ENCODE measurements at regions of chr17 and their contacts with region 1.

Region 1: DNA sequence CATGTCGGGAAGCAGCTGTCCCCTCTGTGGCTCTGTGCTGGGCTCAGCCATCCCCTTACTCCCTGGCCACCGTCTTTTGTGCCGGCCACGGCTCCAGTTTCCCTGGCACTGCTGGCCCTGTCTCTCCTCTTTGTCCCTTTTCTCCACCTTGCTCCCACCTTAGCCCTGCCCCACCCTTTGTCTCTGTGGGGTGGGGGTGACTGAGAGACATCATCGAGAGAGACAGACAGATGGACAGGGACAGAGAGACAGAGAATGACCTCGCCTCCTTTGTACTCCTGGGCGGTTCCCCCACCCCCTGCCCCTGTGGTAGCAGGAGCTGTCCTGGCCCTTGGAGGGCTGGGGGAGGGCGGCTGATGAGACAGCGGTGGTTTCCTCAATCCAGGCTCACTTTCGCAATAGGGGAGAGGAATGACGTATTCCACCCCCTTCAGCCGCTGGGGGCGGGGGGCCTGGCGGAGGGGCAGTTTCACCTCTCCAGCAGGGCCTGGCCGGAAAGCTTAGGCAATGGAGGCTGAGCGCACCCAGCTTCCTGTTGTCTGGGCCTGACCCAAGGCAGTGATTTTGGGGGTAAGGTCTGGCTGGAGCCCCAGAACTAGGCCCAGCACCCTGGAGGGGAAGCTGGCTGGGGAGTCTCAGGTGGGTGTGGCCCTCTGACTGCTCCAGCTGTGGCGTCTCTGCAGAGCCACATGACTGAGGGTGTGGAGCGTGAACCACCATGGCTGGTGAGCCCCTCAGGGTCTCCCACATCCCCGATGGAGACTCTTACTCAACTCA is 7.3 kb downstream of the FMNL1 start:
- DNase-seq: peak; percentile 56 to 93 (median 79)
- ATAC-seq: peak; percentile 57
- H3K4me3 ChIP-seq: peak overlapping the region; percentile 99
- H3K4me3 Mint-ChIP-seq: peak overlapping the region; percentile 87
- H3K27ac ChIP-seq: peak overlapping the region; percentile 98 to 99
- H3K27ac Mint-ChIP-seq: peak overlapping the region; percentile 100
- H3K4me1 ChIP-seq: peaks cover 98% of the 10 kb centered on the region
- H3K4me1 Mint-ChIP-seq: peaks cover 79% of the 10 kb centered on the region
- H3K27me3 ChIP-seq: no peaks in the 10 kb centered on the region
- H3K27me3 Mint-ChIP-seq: no peaks in the 10 kb centered on the region
- CTCF ChIP-seq: no peak

Region 2: GRCh38 chr17:45161019-45161825 is 67.7 kb before region 1 on chr17:
- CTCF ChIA-PET with region 1: no interaction called
- POLR2A ChIA-PET with region 1: interaction called, 57 read pairs
- intact Hi-C with region 1: no loop called
- DNase-seq: peak; percentile 94 to 100 (median 98)
- ATAC-seq: peak; percentile 93
- H3K4me3 ChIP-seq: peak overlapping the region; percentile 97
- H3K4me3 Mint-ChIP-seq: peak overlapping the region; percentile 93
- H3K27ac ChIP-seq: peak overlapping the region; percentile 98 to 99
- H3K27ac Mint-ChIP-seq: peak overlapping the region; percentile 94
- H3K4me1 ChIP-seq: peaks cover 26% of the 10 kb centered on the region
- H3K4me1 Mint-ChIP-seq: peaks cover 37% of the 10 kb centered on the region
- H3K27me3 ChIP-seq: no peaks in the 10 kb centered on the region
- H3K27me3 Mint-ChIP-seq: no peaks in the 10 kb centered on the region
- CTCF ChIP-seq: no peak

Region 3: DNA sequence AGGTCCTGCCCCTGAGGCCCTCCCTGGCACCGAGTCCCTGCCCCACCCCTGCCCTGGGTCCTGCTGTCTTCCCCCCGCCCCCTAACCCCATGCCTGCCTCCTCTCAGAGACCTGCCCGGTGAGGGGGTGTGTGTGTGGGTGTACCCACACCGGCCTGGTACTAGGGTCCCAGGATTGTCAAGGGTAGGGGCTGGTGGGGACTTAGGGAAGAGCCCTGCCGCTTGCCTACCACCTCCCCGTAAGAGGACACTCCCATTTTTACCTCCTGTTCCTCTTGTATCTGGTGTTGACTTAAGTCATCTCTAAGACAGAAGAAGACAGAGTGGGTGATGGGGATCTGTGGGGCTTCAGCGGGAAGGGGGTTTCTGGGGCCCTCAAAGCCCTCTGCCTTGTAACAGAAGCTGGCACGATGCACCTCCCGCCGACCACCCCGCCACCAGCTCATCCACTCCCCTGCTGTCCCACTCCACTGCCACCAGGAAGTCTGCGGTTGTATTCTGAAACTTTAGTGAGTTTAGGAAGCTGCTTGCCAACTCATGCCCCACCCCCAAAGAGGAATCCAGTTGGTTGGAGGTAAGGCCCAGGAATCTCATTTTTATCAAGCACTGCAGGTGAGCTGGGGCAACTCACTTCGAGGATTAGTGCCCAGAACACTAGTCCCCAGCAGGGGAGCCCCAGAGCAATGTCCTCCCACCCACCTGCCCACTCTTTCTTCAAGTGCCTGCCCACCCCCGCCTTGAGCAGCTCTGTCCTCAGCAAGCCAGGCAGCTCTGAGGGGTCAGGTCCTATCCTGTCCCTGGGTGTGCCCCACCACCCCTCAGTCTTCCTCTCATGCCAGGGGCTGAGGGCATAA is 27.4 kb after region 1 on chr17:
- CTCF ChIA-PET with region 1: interaction called, 6 read pairs
- POLR2A ChIA-PET with region 1: interaction called, 23 read pairs
- intact Hi-C with region 1: loop called in 1 of 2 experiments (anchors 5 kb)
- DNase-seq: peak in 1 of 14 experiments; percentile 36
- ATAC-seq: peak; percentile 69
- H3K4me3 ChIP-seq: no peak overlapping the region
- H3K4me3 Mint-ChIP-seq: peak overlapping the region; percentile 61
- H3K27ac ChIP-seq: peak overlapping the region in 1 of 2 donors; percentile 46
- H3K27ac Mint-ChIP-seq: peak overlapping the region; percentile 79
- H3K4me1 ChIP-seq: peaks cover 51% of the 10 kb centered on the region
- H3K4me1 Mint-ChIP-seq: peaks cover 72% of the 10 kb centered on the region
- H3K27me3 ChIP-seq: no peaks in the 10 kb centered on the region
- H3K27me3 Mint-ChIP-seq: no peaks in the 10 kb centered on the region
- CTCF ChIP-seq: peak; percentile 14

Region 4: DNA sequence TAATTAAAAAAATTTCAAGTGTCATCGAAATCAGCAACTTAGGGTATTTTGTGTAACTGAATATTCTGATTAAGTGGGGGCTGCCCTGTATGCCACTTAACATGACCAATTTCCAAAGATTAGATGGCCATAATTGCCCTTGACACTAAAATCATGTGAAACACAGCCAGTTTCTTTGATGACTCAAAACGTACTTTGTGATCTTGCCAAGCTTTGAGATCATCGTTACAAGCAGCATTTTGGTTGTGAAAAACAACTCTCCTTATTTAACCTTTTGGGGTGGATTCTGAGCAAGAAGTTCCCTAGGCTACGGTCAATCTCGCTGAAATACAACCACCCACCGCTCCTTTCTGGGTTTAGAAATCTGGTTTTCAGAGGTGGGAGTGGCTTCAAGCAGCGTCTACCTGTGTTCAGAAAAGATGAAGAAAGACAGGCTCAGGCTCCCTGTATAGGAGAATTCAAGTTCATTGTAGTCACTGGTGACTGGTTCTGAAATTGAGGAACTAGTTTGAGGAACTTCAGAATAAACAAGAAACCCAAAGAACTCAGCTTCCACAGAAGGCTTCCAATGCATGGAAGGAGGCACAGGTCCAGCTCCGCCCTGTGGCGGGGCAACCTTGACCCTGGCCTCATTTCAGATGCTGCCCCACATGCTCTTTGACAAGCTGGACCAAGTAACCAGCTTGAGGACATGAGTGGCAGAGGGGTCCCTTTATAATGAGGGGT is 78.5 kb after region 1 on chr17:
- CTCF ChIA-PET with region 1: interaction called, 4 read pairs
- POLR2A ChIA-PET with region 1: interaction called, 19 read pairs
- intact Hi-C with region 1: no loop called
- DNase-seq: peak in 6 of 14 experiments; percentile 18 to 66 (median 42)
- ATAC-seq: peak; percentile 72
- H3K4me3 ChIP-seq: no peak overlapping the region
- H3K4me3 Mint-ChIP-seq: peak overlapping the region; percentile 66
- H3K27ac ChIP-seq: peak overlapping the region; percentile 26 to 38
- H3K27ac Mint-ChIP-seq: peak overlapping the region; percentile 82
- H3K4me1 ChIP-seq: peaks cover 85% of the 10 kb centered on the region
- H3K4me1 Mint-ChIP-seq: peaks cover 83% of the 10 kb centered on the region
- H3K27me3 ChIP-seq: no peaks in the 10 kb centered on the region
- H3K27me3 Mint-ChIP-seq: no peaks in the 10 kb centered on the region
- CTCF ChIP-seq: no peak

Region 5: GRCh38 chr17:45410144-45411091 is 181.5 kb after region 1 on chr17:
- CTCF ChIA-PET with region 1: no interaction called
- POLR2A ChIA-PET with region 1: interaction called, 10 read pairs
- intact Hi-C with region 1: no loop called
- DNase-seq: peak; percentile 40 to 76 (median 60)
- ATAC-seq: peak; percentile 83
- H3K4me3 ChIP-seq: peak overlapping the region; percentile 86
- H3K4me3 Mint-ChIP-seq: peak overlapping the region; percentile 100
- H3K27ac ChIP-seq: peak overlapping the region; percentile 83 to 91
- H3K27ac Mint-ChIP-seq: peak overlapping the region; percentile 99
- H3K4me1 ChIP-seq: peaks cover 74% of the 10 kb centered on the region
- H3K4me1 Mint-ChIP-seq: peaks cover 56% of the 10 kb centered on the region
- H3K27me3 ChIP-seq: no peaks in the 10 kb centered on the region
- H3K27me3 Mint-ChIP-seq: no peaks in the 10 kb centered on the region
- CTCF ChIP-seq: no peak